Activated CD8-positive, alpha-beta T cell treated with anti-CD3 and anti-CD28 coated beads for 36 hours (primary cell): ENCODE measurements at regions of chr6 and their contacts with region 1.

Region 1: DNA sequence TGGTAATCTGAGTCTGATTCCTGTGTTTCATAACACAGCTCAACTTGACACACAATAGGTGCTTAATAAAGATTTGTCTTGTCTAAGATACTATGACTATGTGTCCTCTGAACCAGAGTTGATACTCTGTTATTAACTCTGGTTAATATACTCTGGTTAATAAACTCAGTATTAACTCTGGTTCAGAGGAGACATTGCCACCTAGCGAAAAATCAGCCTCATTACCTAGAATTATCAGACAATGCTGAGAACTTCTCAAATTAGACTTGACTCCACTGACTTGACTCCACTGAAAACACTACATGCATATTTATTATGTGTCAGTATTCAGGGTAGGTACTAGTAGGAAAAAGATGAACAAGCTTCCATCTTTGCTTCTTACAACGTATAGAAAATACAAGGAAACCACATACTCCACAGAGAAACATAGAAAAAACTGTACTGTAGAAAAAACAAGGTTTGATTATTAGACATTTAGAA is 73.9 kb downstream of the AHI1 start:
- DNase-seq: no peak
- ATAC-seq: peak; percentile 55
- H3K4me3 Mint-ChIP-seq: no peak overlapping the region
- H3K27ac Mint-ChIP-seq: no peak overlapping the region
- H3K4me1 Mint-ChIP-seq: peaks cover 2% of the 10 kb centered on the region
- H3K27me3 Mint-ChIP-seq: no peaks in the 10 kb centered on the region
- CTCF ChIP-seq: peak; percentile 89

Region 2: GRCh38 chr6:135233686-135234489 is 189.8 kb before region 1 on chr6:
- CTCF ChIA-PET with region 1: interaction called, 6 read pairs
- POLR2A ChIA-PET with region 1: interaction called, 3 read pairs
- intact Hi-C with region 1: loop called (anchors 10 kb)
- DNase-seq: no peak
- ATAC-seq: no peak
- H3K4me3 Mint-ChIP-seq: no peak overlapping the region
- H3K27ac Mint-ChIP-seq: no peak overlapping the region
- H3K4me1 Mint-ChIP-seq: peaks cover 19% of the 10 kb centered on the region
- H3K27me3 Mint-ChIP-seq: peaks cover 3% of the 10 kb centered on the region
- CTCF ChIP-seq: no peak

Region 3: GRCh38 chr6:135438907-135439535 is 15.3 kb after region 1 on chr6:
- CTCF ChIA-PET with region 1: interaction called, 18 read pairs
- POLR2A ChIA-PET with region 1: no interaction called
- intact Hi-C with region 1: no loop called
- DNase-seq: peak; percentile 7
- ATAC-seq: no peak
- H3K4me3 Mint-ChIP-seq: no peak overlapping the region
- H3K27ac Mint-ChIP-seq: peak overlapping the region; percentile 34
- H3K4me1 Mint-ChIP-seq: peaks cover 26% of the 10 kb centered on the region
- H3K27me3 Mint-ChIP-seq: no peaks in the 10 kb centered on the region
- CTCF ChIP-seq: peak; percentile 85